ENCODE measurements at regions of chr6 and their contacts with region 1.

Region 1: GRCh38 chr6:81752138-81752920 is at the start of gene TENT5A:
- DNase-seq: peak; percentile 82
- ATAC-seq: peak; percentile 73
- H3K4me3 Mint-ChIP-seq: peak within 1 kb of the TSS; percentile 96
- H3K27ac Mint-ChIP-seq: peak within 1 kb of the TSS; percentile 97
- H3K4me1 Mint-ChIP-seq: peaks cover 40% of the 10 kb centered on the region
- H3K27me3 Mint-ChIP-seq: peaks cover 2% of the 10 kb centered on the region
- CTCF ChIP-seq: no peak
- total RNA-seq, gene TENT5A: 7.5 and 9.4 TPM in 2 replicates

Region 2: GRCh38 chr6:79949233-79949632 is 1803.1 kb before region 1 on chr6:
- CTCF ChIA-PET with region 1: no interaction called
- POLR2A ChIA-PET with region 1: no interaction called
- intact Hi-C with region 1: loop called (anchors 10 kb)
- DNase-seq: no peak
- ATAC-seq: no peak
- H3K4me3 Mint-ChIP-seq: no peak overlapping the region
- H3K27ac Mint-ChIP-seq: no peak overlapping the region
- H3K4me1 Mint-ChIP-seq: peaks cover 19% of the 10 kb centered on the region
- H3K27me3 Mint-ChIP-seq: peaks cover 44% of the 10 kb centered on the region
- CTCF ChIP-seq: no peak

Region 3: GRCh38 chr6:80214436-80215022 is 1537.8 kb before region 1 on chr6:
- CTCF ChIA-PET with region 1: interaction called, 7 read pairs
- POLR2A ChIA-PET with region 1: no interaction called
- intact Hi-C with region 1: loop called (anchors 1 kb)
- DNase-seq: no peak
- ATAC-seq: no peak
- H3K4me3 Mint-ChIP-seq: no peak overlapping the region
- H3K27ac Mint-ChIP-seq: no peak overlapping the region
- H3K4me1 Mint-ChIP-seq: no peaks in the 10 kb centered on the region
- H3K27me3 Mint-ChIP-seq: no peaks in the 10 kb centered on the region
- CTCF ChIP-seq: no peak

Region 4: DNA sequence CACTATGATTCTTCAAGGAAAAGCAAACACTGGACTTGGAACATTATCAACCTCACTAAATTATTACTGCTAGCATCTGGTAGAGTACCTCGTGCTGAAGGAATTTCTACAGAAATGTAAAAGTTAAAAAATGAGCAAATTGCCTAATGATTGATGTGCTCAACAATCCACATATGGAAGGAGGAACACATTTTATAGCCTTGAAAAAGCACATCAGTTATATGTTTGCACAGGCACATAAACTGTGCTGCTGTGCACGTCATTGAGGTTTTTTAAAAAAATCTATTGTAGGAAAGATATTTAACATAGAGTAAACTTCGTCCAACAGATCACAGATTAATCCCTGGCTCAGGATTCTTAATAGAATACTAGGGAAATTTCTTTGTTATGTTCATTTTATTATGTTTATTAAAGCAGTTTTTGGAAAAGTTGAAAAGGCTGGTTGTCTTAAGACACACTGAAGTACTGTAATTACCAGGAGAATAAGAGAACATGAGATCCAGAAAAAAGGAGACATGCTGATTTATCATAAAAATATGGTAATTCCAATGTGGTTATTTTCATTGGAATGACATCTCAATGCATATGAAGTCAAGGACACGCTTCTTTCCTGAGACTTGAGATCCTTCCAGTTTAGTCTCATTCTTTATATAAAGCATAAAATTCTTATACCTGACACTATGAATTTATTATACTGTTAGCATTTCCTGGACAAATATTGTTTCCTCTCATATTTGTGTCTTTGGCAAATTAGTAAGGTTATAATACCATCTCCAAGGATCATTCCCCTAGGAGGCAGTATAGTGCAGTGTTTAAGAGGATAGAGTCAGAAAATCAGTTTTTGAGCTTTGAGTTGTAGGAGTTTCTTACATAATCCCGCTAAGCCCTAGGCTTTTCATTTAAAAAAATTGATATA is 510.9 kb before region 1 on chr6:
- CTCF ChIA-PET with region 1: no interaction called
- POLR2A ChIA-PET with region 1: no interaction called
- intact Hi-C with region 1: loop called (anchors 5 kb)
- DNase-seq: no peak
- ATAC-seq: no peak
- H3K4me3 Mint-ChIP-seq: no peak overlapping the region
- H3K27ac Mint-ChIP-seq: no peak overlapping the region
- H3K4me1 Mint-ChIP-seq: no peaks in the 10 kb centered on the region
- H3K27me3 Mint-ChIP-seq: no peaks in the 10 kb centered on the region
- CTCF ChIP-seq: no peak

Region 5: DNA sequence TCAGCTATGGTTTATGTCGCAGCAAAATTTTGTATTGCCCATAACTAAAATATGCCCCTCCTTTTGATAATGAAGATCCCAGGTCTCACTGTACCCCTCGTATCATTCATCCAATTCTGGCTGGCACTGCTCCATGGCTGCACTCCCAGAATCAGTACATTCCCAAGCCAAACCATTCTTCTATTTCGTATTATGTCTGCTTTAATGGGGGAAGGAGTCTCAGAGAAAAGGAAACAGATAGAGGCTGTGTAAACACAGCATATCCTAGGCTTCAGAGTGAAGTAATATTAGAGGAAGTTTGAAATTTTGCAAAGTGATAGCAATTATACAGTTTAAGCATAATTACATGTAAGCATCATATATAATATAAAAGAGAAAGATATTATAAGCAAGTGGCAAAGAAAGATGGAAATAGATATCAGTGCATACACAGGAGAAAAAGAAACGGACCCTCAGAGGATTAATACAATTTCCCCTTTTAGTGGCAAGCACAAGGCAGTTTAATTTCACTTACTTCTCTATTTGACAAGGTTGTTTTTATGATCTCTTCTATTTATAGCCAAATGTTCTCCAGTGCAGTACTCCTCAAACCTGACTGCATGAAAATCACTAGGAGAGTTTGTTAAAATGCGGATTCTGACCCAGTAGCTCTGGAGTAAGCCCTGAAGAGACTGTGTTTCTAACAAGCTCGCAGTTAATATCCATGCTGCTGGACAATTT is 56.7 kb after region 1 on chr6:
- CTCF ChIA-PET with region 1: interaction called, 6 read pairs
- POLR2A ChIA-PET with region 1: interaction called, 5 read pairs
- intact Hi-C with region 1: loop called (anchors 2 kb)
- DNase-seq: no peak
- ATAC-seq: peak; percentile 65
- H3K4me3 Mint-ChIP-seq: peak overlapping the region; percentile 70
- H3K27ac Mint-ChIP-seq: peak overlapping the region; percentile 78
- H3K4me1 Mint-ChIP-seq: peaks cover 34% of the 10 kb centered on the region
- H3K27me3 Mint-ChIP-seq: no peaks in the 10 kb centered on the region
- CTCF ChIP-seq: no peak

Region 6: GRCh38 chr6:82247634-82248232 is 495.4 kb after region 1 on chr6 and contains the start of gene IBTK:
- CTCF ChIA-PET with region 1: no interaction called
- POLR2A ChIA-PET with region 1: no interaction called
- intact Hi-C with region 1: loop called (anchors 1 kb)
- DNase-seq: peak; percentile 89
- ATAC-seq: peak; percentile 90
- H3K4me3 Mint-ChIP-seq: peak within 1 kb of the TSS; percentile 97
- H3K27ac Mint-ChIP-seq: peak within 1 kb of the TSS; percentile 93
- H3K4me1 Mint-ChIP-seq: peaks cover 33% of the 10 kb centered on the region
- H3K27me3 Mint-ChIP-seq: no peaks in the 10 kb centered on the region
- CTCF ChIP-seq: no peak
- total RNA-seq, gene IBTK: 25.6 and 30.1 TPM in 2 replicates

Measured in activated B cell treated with CpG ODN at 0.5 μM for 24 hours (primary cell).